PC-3 (cell line): ENCODE measurements at regions of chr14 and their contacts with region 1.

Region 1: GRCh38 chr14:74804219-74804826 is 41.2 kb downstream of the YLPM1 start:
- DNase-seq: peak; percentile 64
- ATAC-seq: peak; percentile 71
- H3K4me3 ChIP-seq: no peak overlapping the region
- H3K27ac ChIP-seq: no peak overlapping the region
- H3K4me1 ChIP-seq: no peaks in the 10 kb centered on the region
- H3K27me3 ChIP-seq: no peaks in the 10 kb centered on the region
- CTCF ChIP-seq: peak; percentile 81

Region 2: DNA sequence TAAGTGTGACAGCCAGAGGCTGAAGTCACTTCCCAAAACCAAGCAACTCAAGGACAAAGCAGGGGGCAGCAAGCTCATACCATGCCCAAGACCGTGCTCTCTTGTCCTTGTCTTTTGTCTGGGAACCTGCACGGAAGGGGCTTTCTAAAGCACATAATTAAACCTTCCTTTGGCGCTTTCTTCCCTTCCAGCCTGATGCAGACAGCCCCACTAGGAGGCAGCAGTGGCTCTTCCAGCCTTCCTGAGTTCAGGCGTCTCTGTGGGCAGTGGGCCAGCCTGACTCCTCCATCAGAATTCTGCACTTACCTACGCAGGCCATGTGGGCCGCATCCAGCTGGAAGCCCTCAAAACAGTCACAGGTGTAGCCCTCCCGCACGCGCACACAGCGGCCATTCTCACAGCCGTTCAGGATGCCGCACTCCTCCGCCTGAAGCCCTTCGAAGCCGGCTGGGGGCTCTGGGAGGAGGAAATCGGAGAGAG is 303.1 kb before region 1 on chr14:
- CTCF ChIA-PET with region 1: interaction called, 4 read pairs
- POLR2A ChIA-PET with region 1: interaction called, 5 read pairs
- intact Hi-C with region 1: loop called (anchors 2 kb)
- DNase-seq: peak; percentile 85
- ATAC-seq: peak; percentile 76
- H3K4me3 ChIP-seq: no peak overlapping the region
- H3K27ac ChIP-seq: no peak overlapping the region
- H3K4me1 ChIP-seq: no peaks in the 10 kb centered on the region
- H3K27me3 ChIP-seq: no peaks in the 10 kb centered on the region
- CTCF ChIP-seq: peak; percentile 87

Region 3: DNA sequence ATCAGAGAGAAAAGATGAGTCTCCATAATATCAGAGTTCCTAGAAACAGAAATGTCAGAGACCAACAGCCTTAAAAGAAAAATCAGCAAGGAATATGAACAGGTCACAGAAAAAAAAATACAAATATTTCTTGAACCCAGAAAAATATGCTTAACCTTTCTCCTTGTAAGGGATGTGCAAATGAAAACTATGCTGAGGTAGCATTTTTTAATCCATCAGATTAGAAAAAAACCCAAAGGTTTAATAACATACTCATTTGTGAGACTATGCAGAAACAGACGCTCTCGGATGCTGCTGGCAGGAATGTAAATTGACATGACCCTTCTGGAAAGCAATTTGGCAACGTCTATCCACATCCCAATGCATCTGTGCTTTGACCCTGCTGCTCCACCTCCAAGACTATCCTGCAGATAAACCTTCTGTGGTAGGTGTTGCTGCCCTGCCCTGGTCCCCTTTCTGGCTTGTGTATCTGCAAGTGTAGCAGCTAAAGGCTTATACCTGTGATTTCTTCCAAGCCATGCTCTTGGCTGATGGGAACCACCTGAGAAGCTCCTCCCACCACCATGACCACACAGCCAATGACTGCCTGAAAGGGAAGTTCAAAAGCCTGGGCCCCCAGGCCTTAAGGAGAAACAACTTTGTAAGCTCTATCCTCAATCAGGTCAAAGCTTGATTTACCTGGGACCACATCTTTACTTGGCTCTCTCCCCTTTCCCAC is 241.6 kb before region 1 on chr14:
- CTCF ChIA-PET with region 1: interaction called, 11 read pairs
- POLR2A ChIA-PET with region 1: no interaction called
- intact Hi-C with region 1: no loop called
- DNase-seq: no peak
- ATAC-seq: no peak
- H3K4me3 ChIP-seq: peak overlapping the region; percentile 35; the same call in 1 of the 2 replicates
- H3K27ac ChIP-seq: peak overlapping the region; percentile 60
- H3K4me1 ChIP-seq: peaks cover 36% of the 10 kb centered on the region
- H3K27me3 ChIP-seq: no peaks in the 10 kb centered on the region
- CTCF ChIP-seq: no peak

Region 4: GRCh38 chr14:74747237-74747636 is 57.1 kb before region 1 on chr14:
- CTCF ChIA-PET with region 1: no interaction called
- POLR2A ChIA-PET with region 1: no interaction called
- intact Hi-C with region 1: no loop called
- DNase-seq: no peak
- ATAC-seq: no peak
- H3K4me3 ChIP-seq: no peak overlapping the region
- H3K27ac ChIP-seq: no peak overlapping the region
- H3K4me1 ChIP-seq: no peaks in the 10 kb centered on the region
- H3K27me3 ChIP-seq: no peaks in the 10 kb centered on the region
- CTCF ChIP-seq: no peak

Region 5: GRCh38 chr14:74824997-74825396 is 20.7 kb after region 1 on chr14:
- CTCF ChIA-PET with region 1: no interaction called
- POLR2A ChIA-PET with region 1: no interaction called
- intact Hi-C with region 1: no loop called
- DNase-seq: no peak
- ATAC-seq: no peak
- H3K4me3 ChIP-seq: no peak overlapping the region
- H3K27ac ChIP-seq: no peak overlapping the region
- H3K4me1 ChIP-seq: no peaks in the 10 kb centered on the region
- H3K27me3 ChIP-seq: no peaks in the 10 kb centered on the region
- CTCF ChIP-seq: no peak